Spleen (tissue), 13 donors: ENCODE measurements at regions of chr7 and their contacts with region 1.

Region 1: DNA sequence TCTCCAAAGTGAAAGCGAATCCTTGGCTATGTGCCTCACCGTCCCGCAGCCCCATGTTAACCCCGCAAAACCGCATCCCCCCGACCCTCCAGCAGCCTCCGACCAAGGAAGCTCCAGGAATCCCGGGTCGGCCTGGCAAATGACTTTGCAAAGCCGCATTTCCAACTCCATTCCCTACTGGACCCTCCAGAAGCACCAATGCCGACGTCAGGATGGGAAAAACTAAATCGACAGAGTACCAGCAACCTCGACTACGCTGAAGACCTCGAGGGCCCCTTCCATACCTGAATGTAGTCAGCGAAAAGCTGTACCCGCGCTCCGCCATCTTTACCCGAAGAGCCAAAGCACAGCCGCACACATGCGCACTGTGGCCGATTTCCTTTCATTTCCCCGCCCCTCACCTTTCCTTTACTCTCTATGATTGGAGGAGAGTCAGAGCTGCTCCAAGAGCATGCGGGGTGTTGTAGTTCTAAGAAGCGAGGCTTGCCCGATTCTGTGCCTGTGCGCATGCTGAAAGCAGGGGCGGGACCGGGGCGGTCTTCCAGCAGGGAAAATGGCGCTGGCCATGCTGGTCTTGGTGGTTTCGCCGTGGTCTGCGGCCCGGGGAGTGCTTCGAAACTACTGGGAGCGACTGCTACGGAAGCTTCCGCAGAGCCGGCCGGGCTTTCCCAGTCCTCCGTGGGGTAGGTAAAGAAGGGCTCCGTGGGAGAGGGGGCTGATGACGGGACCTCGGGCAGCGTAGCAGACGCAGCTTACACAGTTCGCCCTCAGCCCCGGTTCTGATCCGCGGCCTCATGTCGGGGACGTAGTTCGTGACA is at the starts of genes MRPL32 and PSMA2:
- DNase-seq: peak; percentile 98
- H3K4me3 ChIP-seq: peak within 1 kb of the TSS; percentile 79 to 97 (median 88)
- H3K27ac ChIP-seq: peak within 1 kb of the TSS; percentile 68 to 92 (median 86)
- H3K4me1 ChIP-seq: peaks cover 31 to 83% (median 65%) of the 10 kb centered on the region in 6 donors
- H3K27me3 ChIP-seq: no peaks in the 10 kb centered on the region
- CTCF ChIP-seq: peak in 1 of 11 experiments; percentile 30
- POLR2A ChIP-seq: peak; percentile 12 to 54 (median 46)
- total RNA-seq, gene MRPL32: 27.7 to 44.7 (median 33.0) TPM
- total RNA-seq, gene PSMA2: 44.3 to 71.1 (median 58.2) TPM

Region 2: GRCh38 chr7:42238709-42239391 is 693.2 kb before region 1 on chr7:
- intact Hi-C with region 1: no loop called
- DNase-seq: no peak
- H3K4me3 ChIP-seq: no peak overlapping the region
- H3K27ac ChIP-seq: peak overlapping the region in 2 of 8 donors; percentile 31 to 48
- H3K4me1 ChIP-seq: peaks cover 0 to 30% (median 13%) of the 10 kb centered on the region in 6 donors
- H3K27me3 ChIP-seq: peaks cover 0 to 89% (median 22%) of the 10 kb centered on the region in 7 donors
- CTCF ChIP-seq: no peak
- POLR2A ChIP-seq: no peak

Region 3: GRCh38 chr7:43834463-43835251 is 902.6 kb after region 1 on chr7:
- intact Hi-C with region 1: loop called (anchors 10 kb)
- DNase-seq: no peak
- H3K4me3 ChIP-seq: peak overlapping the region; percentile 2 to 67 (median 32)
- H3K27ac ChIP-seq: peak overlapping the region; percentile 4 to 76 (median 52)
- H3K4me1 ChIP-seq: peaks cover 6 to 31% (median 18%) of the 10 kb centered on the region in 6 donors
- H3K27me3 ChIP-seq: peaks cover 0 to 4% (median 0%) of the 10 kb centered on the region in 7 donors
- CTCF ChIP-seq: no peak
- POLR2A ChIP-seq: no peak